Naive thymus-derived CD4-positive, alpha-beta T cell (primary cell): ENCODE measurements at regions of chr1 and their contacts with region 1.

Region 1: GRCh38 chr1:93078986-93079654 is at the start of gene MTF2:
- DNase-seq: peak; percentile 84 to 92 (median 90)
- ATAC-seq: peak; percentile 96
- H3K4me3 ChIP-seq: peak within 1 kb of the TSS; percentile 88
- H3K4me3 Mint-ChIP-seq: peak within 1 kb of the TSS; percentile 94 to 99 (median 97)
- H3K27ac ChIP-seq: peak within 1 kb of the TSS; percentile 93
- H3K27ac Mint-ChIP-seq: peak within 1 kb of the TSS; percentile 88 to 99 (median 94)
- H3K4me1 ChIP-seq: peaks cover 10 to 22% of the 10 kb centered on the region in 2 donors
- H3K4me1 Mint-ChIP-seq: peaks cover 34 to 58% (median 50%) of the 10 kb centered on the region in 7 donors
- H3K27me3 ChIP-seq: no peaks in the 10 kb centered on the region
- H3K27me3 Mint-ChIP-seq: no peaks in the 10 kb centered on the region
- total RNA-seq, gene MTF2: 35.3 to 63.1 (median 47.1) TPM

Region 2: GRCh38 chr1:91500756-91501522 is 1578.2 kb before region 1 on chr1 and contains the start of gene CDC7:
- CTCF ChIA-PET with region 1: no interaction called
- POLR2A ChIA-PET with region 1: no interaction called
- intact Hi-C with region 1: loop called in 1 of 2 experiments (anchors 5 kb)
- DNase-seq: peak; percentile 67 to 86 (median 79)
- ATAC-seq: peak; percentile 85
- H3K4me3 ChIP-seq: peak within 1 kb of the TSS; percentile 97
- H3K4me3 Mint-ChIP-seq: no peak within 1 kb of the TSS
- H3K27ac ChIP-seq: peak within 1 kb of the TSS; percentile 85
- H3K27ac Mint-ChIP-seq: no peak within 1 kb of the TSS
- H3K4me1 ChIP-seq: peaks cover 0 to 11% of the 10 kb centered on the region in 2 donors
- H3K4me1 Mint-ChIP-seq: peaks cover 14 to 34% (median 18%) of the 10 kb centered on the region in 7 donors
- H3K27me3 ChIP-seq: no peaks in the 10 kb centered on the region
- H3K27me3 Mint-ChIP-seq: no peaks in the 10 kb centered on the region
- total RNA-seq, gene CDC7: 5.3 to 17.9 (median 5.9) TPM

Region 3: GRCh38 chr1:92909321-92909720 is 169.8 kb before region 1 on chr1:
- CTCF ChIA-PET with region 1: no interaction called
- POLR2A ChIA-PET with region 1: no interaction called
- intact Hi-C with region 1: no loop called
- DNase-seq: no peak
- ATAC-seq: no peak
- H3K4me3 ChIP-seq: no peak overlapping the region
- H3K4me3 Mint-ChIP-seq: no peak overlapping the region
- H3K27ac ChIP-seq: no peak overlapping the region
- H3K27ac Mint-ChIP-seq: no peak overlapping the region
- H3K4me1 ChIP-seq: no peaks in the 10 kb centered on the region
- H3K4me1 Mint-ChIP-seq: peaks cover 23 to 68% (median 51%) of the 10 kb centered on the region in 7 donors
- H3K27me3 ChIP-seq: no peaks in the 10 kb centered on the region
- H3K27me3 Mint-ChIP-seq: no peaks in the 10 kb centered on the region

Region 4: DNA sequence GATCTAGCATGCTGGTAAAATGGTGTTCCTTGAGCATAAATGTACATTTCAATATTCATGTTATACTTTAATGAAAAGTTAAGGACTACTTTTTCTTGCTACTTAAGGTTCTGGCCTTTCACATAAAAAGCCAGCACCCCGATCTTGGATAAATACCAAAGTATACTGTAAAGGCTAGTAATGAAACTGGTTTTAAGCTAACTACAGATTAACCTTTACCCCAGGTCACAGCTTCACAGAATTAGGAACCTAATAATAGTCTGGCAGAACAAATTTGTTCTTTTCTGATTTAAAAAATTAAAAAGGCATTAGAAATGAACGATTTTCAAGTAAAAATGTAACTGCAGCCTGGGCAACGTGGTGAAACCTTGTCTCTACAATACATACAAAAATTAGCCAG is 141.4 kb before region 1 on chr1:
- CTCF ChIA-PET with region 1: no interaction called
- POLR2A ChIA-PET with region 1: no interaction called
- intact Hi-C with region 1: no loop called
- DNase-seq: no peak
- ATAC-seq: no peak
- H3K4me3 ChIP-seq: no peak overlapping the region
- H3K4me3 Mint-ChIP-seq: peak overlapping the region in 1 of 10 donors; percentile 15
- H3K27ac ChIP-seq: no peak overlapping the region
- H3K27ac Mint-ChIP-seq: peak overlapping the region in 1 of 9 donors; percentile 55
- H3K4me1 ChIP-seq: peaks cover 4 to 10% of the 10 kb centered on the region in 2 donors
- H3K4me1 Mint-ChIP-seq: peaks cover 16 to 77% (median 65%) of the 10 kb centered on the region in 7 donors
- H3K27me3 ChIP-seq: no peaks in the 10 kb centered on the region
- H3K27me3 Mint-ChIP-seq: no peaks in the 10 kb centered on the region

Region 5: DNA sequence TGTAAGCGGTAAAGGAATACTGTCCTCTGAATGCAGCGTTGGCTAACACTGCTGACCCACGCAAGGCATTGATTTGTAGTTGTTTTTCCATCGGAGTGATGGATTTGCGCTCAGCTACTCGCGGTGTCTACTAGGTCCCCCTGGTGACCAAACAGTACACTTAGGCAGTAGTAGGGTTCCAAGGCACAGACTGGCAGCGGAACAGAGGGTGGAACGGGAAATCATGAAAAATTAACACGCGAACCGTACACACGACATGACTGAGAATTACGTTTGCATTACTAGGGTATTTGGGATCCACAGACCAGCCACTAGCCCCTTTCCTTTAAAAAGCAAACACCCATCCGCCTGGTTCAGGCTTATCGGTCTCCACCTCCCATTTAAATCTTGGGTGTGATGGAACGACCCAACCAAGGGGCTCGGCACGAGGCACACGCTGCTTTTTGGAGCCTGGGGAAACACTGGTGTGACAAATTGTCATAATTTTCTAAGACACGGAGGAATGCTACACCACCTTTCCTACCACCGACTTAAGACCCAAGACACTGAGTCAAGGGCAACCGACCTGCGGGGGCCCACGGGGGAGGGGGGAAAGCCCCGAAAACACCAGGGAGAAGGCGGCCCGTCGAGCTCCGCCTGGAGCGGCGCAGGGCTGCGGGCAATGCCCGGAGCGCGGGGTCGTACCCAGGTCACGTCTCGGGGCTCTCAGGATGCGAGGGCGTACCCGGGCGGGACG is 118.6 kb before region 1 on chr1:
- CTCF ChIA-PET with region 1: interaction called, 7 read pairs
- POLR2A ChIA-PET with region 1: interaction called, 14 read pairs
- intact Hi-C with region 1: loop called (anchors 1 to 2 kb)
- DNase-seq: peak in 8 of 9 donors; percentile 57 to 85 (median 76)
- ATAC-seq: peak; percentile 65
- H3K4me3 ChIP-seq: peak overlapping the region; percentile 58
- H3K4me3 Mint-ChIP-seq: peak overlapping the region in 9 of 10 donors; percentile 86 to 97 (median 90)
- H3K27ac ChIP-seq: peak overlapping the region; percentile 100
- H3K27ac Mint-ChIP-seq: peak overlapping the region; percentile 95 to 99 (median 98)
- H3K4me1 ChIP-seq: peaks cover 39 to 55% of the 10 kb centered on the region in 2 donors
- H3K4me1 Mint-ChIP-seq: peaks cover 37 to 46% (median 41%) of the 10 kb centered on the region in 7 donors
- H3K27me3 ChIP-seq: no peaks in the 10 kb centered on the region
- H3K27me3 Mint-ChIP-seq: no peaks in the 10 kb centered on the region

Region 6: DNA sequence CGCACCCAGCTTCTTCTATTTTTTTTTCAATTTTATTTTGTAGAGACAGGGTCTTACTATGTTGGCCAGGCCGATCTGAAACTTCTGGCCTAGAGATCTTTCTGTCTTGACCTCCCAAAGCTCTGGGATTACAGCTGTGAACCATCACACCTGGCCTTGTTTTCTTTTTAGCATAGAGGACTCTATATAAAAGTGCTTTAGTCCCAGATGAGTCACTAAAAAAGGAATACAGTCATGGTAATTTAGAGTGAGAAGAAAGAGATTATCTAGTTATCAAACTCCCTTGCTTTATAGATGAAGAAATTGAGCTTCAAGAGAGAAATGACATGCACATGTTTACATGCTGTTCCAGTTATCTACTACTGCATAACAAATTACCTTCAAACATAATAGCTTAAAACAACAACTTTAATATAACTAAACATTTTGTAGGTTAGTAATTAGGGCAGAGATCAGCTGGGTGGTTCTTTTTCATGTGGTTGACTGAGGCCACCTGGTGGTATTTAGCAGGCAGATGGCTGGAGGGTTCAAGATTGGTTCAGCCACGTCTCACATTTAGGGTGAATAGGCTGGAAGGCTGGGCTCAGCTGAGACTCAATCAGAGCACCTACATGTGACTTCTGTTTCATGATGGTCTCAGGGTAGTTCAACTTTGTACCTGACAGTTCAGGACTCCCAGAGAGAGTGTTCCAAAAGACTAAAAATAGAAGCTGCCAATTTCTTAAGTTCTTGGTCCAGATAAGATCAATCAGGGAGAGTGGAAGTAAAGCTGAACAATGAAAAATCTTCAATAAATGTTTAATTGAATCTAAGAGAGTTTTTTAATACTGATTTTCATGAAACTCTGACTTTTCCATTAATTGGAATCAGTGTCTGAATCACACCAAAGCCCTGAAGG is 17.0 kb before region 1 on chr1:
- CTCF ChIA-PET with region 1: interaction called, 3 read pairs
- POLR2A ChIA-PET with region 1: interaction called, 15 read pairs
- intact Hi-C with region 1: no loop called
- DNase-seq: peak in 7 of 9 donors; percentile 14 to 54 (median 49)
- ATAC-seq: peak; percentile 80
- H3K4me3 ChIP-seq: no peak overlapping the region
- H3K4me3 Mint-ChIP-seq: no peak overlapping the region
- H3K27ac ChIP-seq: no peak overlapping the region
- H3K27ac Mint-ChIP-seq: peak overlapping the region in 1 of 9 donors; percentile 23
- H3K4me1 ChIP-seq: no peaks in the 10 kb centered on the region
- H3K4me1 Mint-ChIP-seq: peaks cover 0 to 6% (median 3%) of the 10 kb centered on the region in 7 donors
- H3K27me3 ChIP-seq: peaks cover 0 to 1% of the 10 kb centered on the region in 2 donors
- H3K27me3 Mint-ChIP-seq: peaks cover 5 to 53% (median 16%) of the 10 kb centered on the region in 5 donors

Region 7: GRCh38 chr1:93123201-93123783 is 44.2 kb after region 1 on chr1:
- CTCF ChIA-PET with region 1: no interaction called
- POLR2A ChIA-PET with region 1: interaction called, 4 read pairs
- intact Hi-C with region 1: loop called (anchors 5 kb)
- DNase-seq: no peak
- ATAC-seq: no peak
- H3K4me3 ChIP-seq: no peak overlapping the region
- H3K4me3 Mint-ChIP-seq: no peak overlapping the region
- H3K27ac ChIP-seq: no peak overlapping the region
- H3K27ac Mint-ChIP-seq: no peak overlapping the region
- H3K4me1 ChIP-seq: no peaks in the 10 kb centered on the region
- H3K4me1 Mint-ChIP-seq: peaks cover 2 to 11% (median 6%) of the 10 kb centered on the region in 7 donors
- H3K27me3 ChIP-seq: no peaks in the 10 kb centered on the region
- H3K27me3 Mint-ChIP-seq: no peaks in the 10 kb centered on the region

Region 8: GRCh38 chr1:93345633-93346420 is 266.7 kb after region 1 on chr1 and contains the start of gene DR1:
- CTCF ChIA-PET with region 1: no interaction called
- POLR2A ChIA-PET with region 1: interaction called, 17 read pairs
- intact Hi-C with region 1: loop called (anchors 1 to 2 kb)
- DNase-seq: peak; percentile 82 to 96 (median 91)
- ATAC-seq: peak; percentile 91
- H3K4me3 ChIP-seq: peak within 1 kb of the TSS; percentile 93
- H3K4me3 Mint-ChIP-seq: peak within 1 kb of the TSS; percentile 92 to 100 (median 99)
- H3K27ac ChIP-seq: peak within 1 kb of the TSS; percentile 88
- H3K27ac Mint-ChIP-seq: peak within 1 kb of the TSS; percentile 89 to 99 (median 98)
- H3K4me1 ChIP-seq: peaks cover 13 to 25% of the 10 kb centered on the region in 2 donors
- H3K4me1 Mint-ChIP-seq: peaks cover 19 to 47% (median 35%) of the 10 kb centered on the region in 7 donors
- H3K27me3 ChIP-seq: no peaks in the 10 kb centered on the region
- H3K27me3 Mint-ChIP-seq: no peaks in the 10 kb centered on the region
- total RNA-seq, gene DR1: 46.2 to 104 (median 62.7) TPM

Region 9: DNA sequence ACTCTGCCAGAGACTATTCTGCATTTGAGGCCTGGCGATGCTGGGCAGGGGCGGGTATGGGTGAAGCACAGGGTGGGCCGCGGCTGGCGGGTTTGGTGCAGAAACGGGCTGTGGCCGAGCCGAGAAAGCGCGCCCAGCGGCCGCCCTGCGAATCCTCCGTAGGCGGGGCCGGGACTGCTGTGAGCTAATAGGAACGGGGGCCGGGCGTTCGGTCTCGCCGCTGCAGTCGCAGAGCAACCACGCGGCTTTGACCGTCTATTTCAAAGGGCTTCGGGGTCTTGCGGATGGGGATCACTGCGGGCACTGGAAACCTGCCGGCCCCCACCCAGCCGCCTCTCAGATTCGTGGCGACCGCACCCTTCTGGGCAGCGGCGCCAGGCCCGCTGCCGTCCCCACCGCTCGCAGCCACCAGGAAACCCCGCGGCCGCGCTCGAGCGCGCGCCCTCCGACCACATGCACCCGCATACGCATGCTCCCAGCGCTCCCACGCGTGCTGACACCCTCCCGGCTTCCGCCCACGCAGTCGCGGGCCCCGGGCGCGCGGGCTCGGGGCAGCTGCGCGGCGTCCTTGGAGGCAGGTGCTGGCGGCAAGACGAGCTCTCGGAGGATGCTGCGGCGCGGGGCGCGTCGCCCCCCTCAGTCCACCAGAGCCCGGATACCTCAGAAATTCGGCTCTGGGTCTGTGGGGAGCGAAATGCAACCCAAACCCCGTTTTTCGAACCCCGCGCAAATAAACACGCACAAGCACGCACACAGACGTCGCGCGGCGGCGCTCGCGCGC is 767.3 kb after region 1 on chr1:
- CTCF ChIA-PET with region 1: no interaction called
- POLR2A ChIA-PET with region 1: interaction called, 9 read pairs
- intact Hi-C with region 1: loop called (anchors 1 kb)
- DNase-seq: peak; percentile 78 to 91 (median 89)
- ATAC-seq: peak; percentile 71
- H3K4me3 ChIP-seq: peak overlapping the region; percentile 90
- H3K4me3 Mint-ChIP-seq: peak overlapping the region; percentile 86 to 97 (median 91)
- H3K27ac ChIP-seq: peak overlapping the region; percentile 88
- H3K27ac Mint-ChIP-seq: peak overlapping the region; percentile 86 to 100 (median 96)
- H3K4me1 ChIP-seq: peaks cover 4 to 16% of the 10 kb centered on the region in 2 donors
- H3K4me1 Mint-ChIP-seq: peaks cover 15 to 36% (median 24%) of the 10 kb centered on the region in 7 donors
- H3K27me3 ChIP-seq: no peaks in the 10 kb centered on the region
- H3K27me3 Mint-ChIP-seq: peaks cover 0 to 13% (median 0%) of the 10 kb centered on the region in 5 donors